ENCODE measurements at regions of chr9 and their contacts with region 1.

Region 1: GRCh38 chr9:24552526-24553182 is 7.0 kb upstream of the IZUMO3 start:
- DNase-seq: no peak

Region 2: DNA sequence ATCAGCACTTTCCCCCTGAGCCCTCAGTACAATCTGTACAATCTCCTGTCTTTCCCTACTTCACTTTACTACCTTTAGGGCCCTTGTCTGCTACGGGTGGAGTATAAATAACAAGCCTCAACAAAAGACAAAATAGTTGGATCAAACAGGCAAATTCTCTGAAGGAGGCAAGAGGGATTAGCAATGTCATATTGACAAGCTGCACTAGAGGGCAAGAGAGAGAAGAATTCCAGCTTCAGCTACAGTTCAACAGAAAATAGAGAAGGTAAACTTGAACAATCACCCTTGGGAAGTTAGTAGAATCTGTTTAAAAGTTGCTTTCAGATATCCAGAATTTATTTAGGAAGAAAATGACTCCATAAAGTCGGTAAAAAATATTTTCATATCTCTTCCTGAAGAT is 61.4 kb after region 1 on chr9:
- intact Hi-C with region 1: loop called (anchors 10 kb)
- DNase-seq: peak in 1 of 42 donors; percentile 5

Measured in head of caudate nucleus (tissue), 42 donors.